ENCODE measurements at regions of chr18 and their contacts with region 1.

Region 1: GRCh38 chr18:27605107-27605834 is 420.2 kb upstream of the CHST9 start:
- DNase-seq: peak in 1 of 3 donors; percentile 65
- ATAC-seq: peak; percentile 79
- H3K4me3 ChIP-seq: no peak overlapping the region
- H3K4me1 ChIP-seq: no peaks in the 10 kb centered on the region
- CTCF ChIP-seq: peak; percentile 48

Region 2: GRCh38 chr18:27355019-27355707 is 250.1 kb before region 1 on chr18:
- intact Hi-C with region 1: loop called in 1 of 2 experiments (anchors 10 kb)
- DNase-seq: no peak
- ATAC-seq: no peak
- H3K4me3 ChIP-seq: no peak overlapping the region
- H3K4me1 ChIP-seq: no peaks in the 10 kb centered on the region
- CTCF ChIP-seq: no peak